Activated CD8-positive, alpha-beta T cell treated with anti-CD3 and anti-CD28 coated beads for 36 hours (primary cell): ENCODE measurements at regions of chr1 and their contacts with region 1.

Region 1: GRCh38 chr1:11645670-11646265 is 8.5 kb downstream of the FBXO2 start:
- DNase-seq: peak; percentile 92
- ATAC-seq: peak; percentile 46
- H3K4me3 Mint-ChIP-seq: no peak overlapping the region
- H3K27ac Mint-ChIP-seq: no peak overlapping the region
- H3K4me1 Mint-ChIP-seq: peaks cover 11% of the 10 kb centered on the region
- H3K27me3 Mint-ChIP-seq: no peaks in the 10 kb centered on the region
- CTCF ChIP-seq: peak; percentile 85

Region 2: GRCh38 chr1:11248155-11248554 is 397.6 kb before region 1 on chr1:
- CTCF ChIA-PET with region 1: interaction called, 56 read pairs
- POLR2A ChIA-PET with region 1: no interaction called
- intact Hi-C with region 1: loop called (anchors 5 kb)
- DNase-seq: no peak
- ATAC-seq: no peak
- H3K4me3 Mint-ChIP-seq: no peak overlapping the region
- H3K27ac Mint-ChIP-seq: no peak overlapping the region
- H3K4me1 Mint-ChIP-seq: no peaks in the 10 kb centered on the region
- H3K27me3 Mint-ChIP-seq: no peaks in the 10 kb centered on the region
- CTCF ChIP-seq: no peak

Region 3: GRCh38 chr1:11478571-11479374 is 167.0 kb before region 1 on chr1 and contains the start of gene DISP3:
- CTCF ChIA-PET with region 1: interaction called, 8 read pairs
- POLR2A ChIA-PET with region 1: interaction called, 3 read pairs
- intact Hi-C with region 1: loop called (anchors 10 kb)
- DNase-seq: peak; percentile 88
- ATAC-seq: peak; percentile 93
- H3K4me3 Mint-ChIP-seq: peak within 1 kb of the TSS; percentile 56
- H3K27ac Mint-ChIP-seq: no peak within 1 kb of the TSS
- H3K4me1 Mint-ChIP-seq: peaks cover 9% of the 10 kb centered on the region
- H3K27me3 Mint-ChIP-seq: peaks cover 36% of the 10 kb centered on the region
- CTCF ChIP-seq: peak; percentile 92
- total RNA-seq, gene DISP3: 0.63 to 0.65 TPM

Region 4: DNA sequence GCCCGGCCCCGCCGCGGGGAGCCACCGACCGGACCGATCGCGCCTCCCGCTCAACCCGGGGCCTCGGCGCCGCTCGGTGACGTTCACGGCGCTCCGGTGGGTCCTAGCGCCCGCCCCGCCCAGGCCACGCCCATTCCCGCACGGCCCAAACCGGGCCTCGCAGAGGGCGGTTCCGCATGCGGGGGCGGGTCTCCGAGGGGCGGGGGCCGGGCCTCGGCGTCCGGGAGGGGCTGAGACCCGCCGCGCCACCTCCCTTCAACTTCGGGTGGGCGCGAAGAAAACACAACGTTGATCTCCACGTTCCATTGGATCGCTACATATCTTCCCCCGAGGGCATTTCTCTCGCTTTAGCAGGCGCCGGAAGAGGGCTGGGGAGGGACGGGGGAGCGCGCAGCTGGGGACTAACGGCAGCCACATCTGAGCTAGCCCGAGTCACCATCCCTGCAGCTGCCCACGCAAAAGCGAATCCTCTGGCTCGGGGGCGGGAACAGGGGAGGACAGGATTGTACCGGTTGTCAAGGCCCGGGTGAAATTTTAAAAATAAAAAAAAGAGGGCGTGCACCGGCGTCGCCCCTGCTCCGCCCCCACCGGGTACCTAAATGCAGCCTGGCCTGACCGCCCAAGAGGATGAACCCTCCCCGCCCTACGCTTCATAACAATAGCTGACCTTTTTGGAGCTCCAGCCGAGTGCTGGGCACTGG is 35.5 kb after region 1 on chr1 and contains the start of gene MAD2L2:
- CTCF ChIA-PET with region 1: interaction called, 12 read pairs
- POLR2A ChIA-PET with region 1: no interaction called
- intact Hi-C with region 1: no loop called
- DNase-seq: peak; percentile 95
- ATAC-seq: peak; percentile 88
- H3K4me3 Mint-ChIP-seq: peak within 1 kb of the TSS; percentile 84
- H3K27ac Mint-ChIP-seq: peak within 1 kb of the TSS; percentile 92
- H3K4me1 Mint-ChIP-seq: peaks cover 13% of the 10 kb centered on the region
- H3K27me3 Mint-ChIP-seq: peaks cover 4% of the 10 kb centered on the region
- CTCF ChIP-seq: no peak
- total RNA-seq, gene MAD2L2: 86.5 to 90.4 TPM

Region 5: GRCh38 chr1:11708554-11709350 is 63.0 kb after region 1 on chr1:
- CTCF ChIA-PET with region 1: interaction called, 18 read pairs
- POLR2A ChIA-PET with region 1: no interaction called
- intact Hi-C with region 1: no loop called
- DNase-seq: peak; percentile 24
- ATAC-seq: peak; percentile 57
- H3K4me3 Mint-ChIP-seq: no peak overlapping the region
- H3K27ac Mint-ChIP-seq: no peak overlapping the region
- H3K4me1 Mint-ChIP-seq: no peaks in the 10 kb centered on the region
- H3K27me3 Mint-ChIP-seq: no peaks in the 10 kb centered on the region
- CTCF ChIP-seq: no peak

Region 6: GRCh38 chr1:11735854-11736745 is 90.3 kb after region 1 on chr1 and contains the start of gene AGTRAP:
- CTCF ChIA-PET with region 1: interaction called, 23 read pairs
- POLR2A ChIA-PET with region 1: interaction called, 12 read pairs
- intact Hi-C with region 1: loop called (anchors 5 kb)
- DNase-seq: peak; percentile 94
- ATAC-seq: peak; percentile 79
- H3K4me3 Mint-ChIP-seq: peak within 1 kb of the TSS; percentile 95
- H3K27ac Mint-ChIP-seq: peak within 1 kb of the TSS; percentile 91
- H3K4me1 Mint-ChIP-seq: peaks cover 50% of the 10 kb centered on the region
- H3K27me3 Mint-ChIP-seq: no peaks in the 10 kb centered on the region
- CTCF ChIP-seq: peak; percentile 25
- total RNA-seq, gene AGTRAP: 8.9 to 9.4 TPM

Region 7: GRCh38 chr1:11784993-11785769 is 139.4 kb after region 1 on chr1:
- CTCF ChIA-PET with region 1: no interaction called
- POLR2A ChIA-PET with region 1: no interaction called
- intact Hi-C with region 1: no loop called
- DNase-seq: peak; percentile 52
- ATAC-seq: peak; percentile 75
- H3K4me3 Mint-ChIP-seq: no peak overlapping the region
- H3K27ac Mint-ChIP-seq: no peak overlapping the region
- H3K4me1 Mint-ChIP-seq: peaks cover 3% of the 10 kb centered on the region
- H3K27me3 Mint-ChIP-seq: no peaks in the 10 kb centered on the region
- CTCF ChIP-seq: peak; percentile 80